ENCODE measurements at regions of chr19 and their contacts with region 1.

Region 1: GRCh38 chr19:51158474-51159129 is 16.5 kb downstream of the SIGLEC7 start:
- DNase-seq: peak; percentile 33
- ATAC-seq: peak; percentile 68; the same call in 1 of the 2 replicates
- H3K4me3 ChIP-seq: no peak overlapping the region
- H3K27ac ChIP-seq: no peak overlapping the region
- H3K4me1 ChIP-seq: no peaks in the 10 kb centered on the region
- H3K27me3 ChIP-seq: no peaks in the 10 kb centered on the region
- CTCF ChIP-seq: peak; percentile 91

Region 2: GRCh38 chr19:51079481-51080110 is 79.0 kb before region 1 on chr19:
- CTCF ChIA-PET with region 1: no interaction called
- POLR2A ChIA-PET with region 1: no interaction called
- in situ Hi-C with region 1: no loop called
- intact Hi-C with region 1: no loop called
- DNase-seq: no peak
- ATAC-seq: no peak
- H3K4me3 ChIP-seq: no peak overlapping the region
- H3K27ac ChIP-seq: no peak overlapping the region
- H3K4me1 ChIP-seq: no peaks in the 10 kb centered on the region
- H3K27me3 ChIP-seq: no peaks in the 10 kb centered on the region
- CTCF ChIP-seq: no peak

Region 3: GRCh38 chr19:51259348-51260245 is 101.0 kb after region 1 on chr19:
- CTCF ChIA-PET with region 1: no interaction called
- POLR2A ChIA-PET with region 1: no interaction called
- in situ Hi-C with region 1: no loop called
- intact Hi-C with region 1: loop called (anchors 5 kb)
- DNase-seq: peak; percentile 20
- ATAC-seq: peak; percentile 76; the same call in 1 of the 2 replicates
- H3K4me3 ChIP-seq: no peak overlapping the region
- H3K27ac ChIP-seq: no peak overlapping the region
- H3K4me1 ChIP-seq: no peaks in the 10 kb centered on the region
- H3K27me3 ChIP-seq: peaks cover 5% of the 10 kb centered on the region
- CTCF ChIP-seq: peak; percentile 81

Region 4: DNA sequence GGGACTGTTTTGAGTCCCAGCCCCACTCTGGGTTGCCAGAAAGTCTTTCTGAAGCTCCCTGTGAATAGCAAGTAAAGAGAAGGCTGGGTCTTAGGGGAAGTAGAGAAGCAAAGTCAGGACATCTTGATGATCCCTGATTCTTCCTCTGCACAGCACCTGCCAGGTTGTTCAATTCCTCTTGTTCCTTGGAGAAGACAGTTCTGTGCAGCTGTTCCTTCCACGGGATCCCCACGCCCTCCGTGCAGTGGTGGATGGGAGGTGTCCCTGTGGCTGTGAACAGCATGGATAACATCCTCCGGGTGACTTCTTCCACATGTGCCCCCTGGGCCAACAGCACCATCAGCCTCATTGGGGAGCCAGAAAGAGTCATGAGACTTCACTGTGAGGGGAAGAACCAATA is 123.7 kb after region 1 on chr19:
- CTCF ChIA-PET with region 1: no interaction called
- POLR2A ChIA-PET with region 1: no interaction called
- in situ Hi-C with region 1: no loop called
- intact Hi-C with region 1: no loop called
- DNase-seq: no peak
- ATAC-seq: no peak
- H3K4me3 ChIP-seq: no peak overlapping the region
- H3K27ac ChIP-seq: no peak overlapping the region
- H3K4me1 ChIP-seq: no peaks in the 10 kb centered on the region
- H3K27me3 ChIP-seq: no peaks in the 10 kb centered on the region; the same call in 1 of the 2 replicates
- CTCF ChIP-seq: no peak